H1 (cell line): ENCODE measurements at regions of chr16 and their contacts with region 1.

Region 1: GRCh38 chr16:67504041-67505021 is 21.0 kb upstream of the AGRP start:
- DNase-seq: no peak
- H3K4me3 ChIP-seq: no peak overlapping the region
- H3K27ac ChIP-seq: no peak overlapping the region
- H3K4me1 ChIP-seq: peaks cover 0 to 4% (median 2%) of the 10 kb centered on the region in 4 experiments; a peak in 3 of 7 replicates
- H3K27me3 ChIP-seq: peaks cover 0 to 2% (median 0%) of the 10 kb centered on the region in 4 experiments; a peak in 4 of 7 replicates
- CTCF ChIP-seq: no peak
- EP300 ChIP-seq: no peak
- POLR2A ChIP-seq: no peak
- RAD21 ChIP-seq: no peak

Region 2: DNA sequence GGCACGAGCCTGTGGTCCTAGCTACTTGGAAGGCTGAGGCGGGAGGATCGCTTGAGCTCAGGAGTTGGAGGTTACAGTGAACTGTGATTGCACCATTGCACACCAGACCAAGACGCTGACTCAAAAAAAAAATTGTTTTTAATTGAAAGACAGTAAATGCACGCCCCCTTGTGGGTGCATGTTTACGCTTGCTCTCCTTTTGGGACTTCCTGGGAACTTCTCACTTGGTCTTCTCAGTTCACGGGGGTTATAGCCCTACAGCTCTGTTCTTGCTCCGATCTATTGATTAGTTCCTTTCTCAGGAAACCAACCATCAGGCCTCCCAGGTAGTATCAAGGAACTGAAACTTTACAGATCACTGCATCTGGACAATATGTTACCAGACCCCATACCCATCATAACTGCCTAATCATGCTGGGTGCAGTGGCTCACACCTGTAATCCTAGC is 10.1 kb after region 1 on chr16:
- CTCF ChIA-PET with region 1: interaction called, 335 read pairs
- POLR2A ChIA-PET with region 1: interaction called, 3 read pairs
- DNase-seq: peak in 1 of 2 experiments; percentile 69
- H3K4me3 ChIP-seq: no peak overlapping the region
- H3K27ac ChIP-seq: no peak overlapping the region
- H3K4me1 ChIP-seq: no peaks in the 10 kb centered on the region
- H3K27me3 ChIP-seq: peaks cover 0 to 11% (median 5%) of the 10 kb centered on the region in 4 experiments; a peak in 2 of 7 replicates
- CTCF ChIP-seq: peak; percentile 38 to 77 (median 69)
- EP300 ChIP-seq: no peak
- POLR2A ChIP-seq: no peak
- RAD21 ChIP-seq: peak; percentile 55 to 65

Region 3: DNA sequence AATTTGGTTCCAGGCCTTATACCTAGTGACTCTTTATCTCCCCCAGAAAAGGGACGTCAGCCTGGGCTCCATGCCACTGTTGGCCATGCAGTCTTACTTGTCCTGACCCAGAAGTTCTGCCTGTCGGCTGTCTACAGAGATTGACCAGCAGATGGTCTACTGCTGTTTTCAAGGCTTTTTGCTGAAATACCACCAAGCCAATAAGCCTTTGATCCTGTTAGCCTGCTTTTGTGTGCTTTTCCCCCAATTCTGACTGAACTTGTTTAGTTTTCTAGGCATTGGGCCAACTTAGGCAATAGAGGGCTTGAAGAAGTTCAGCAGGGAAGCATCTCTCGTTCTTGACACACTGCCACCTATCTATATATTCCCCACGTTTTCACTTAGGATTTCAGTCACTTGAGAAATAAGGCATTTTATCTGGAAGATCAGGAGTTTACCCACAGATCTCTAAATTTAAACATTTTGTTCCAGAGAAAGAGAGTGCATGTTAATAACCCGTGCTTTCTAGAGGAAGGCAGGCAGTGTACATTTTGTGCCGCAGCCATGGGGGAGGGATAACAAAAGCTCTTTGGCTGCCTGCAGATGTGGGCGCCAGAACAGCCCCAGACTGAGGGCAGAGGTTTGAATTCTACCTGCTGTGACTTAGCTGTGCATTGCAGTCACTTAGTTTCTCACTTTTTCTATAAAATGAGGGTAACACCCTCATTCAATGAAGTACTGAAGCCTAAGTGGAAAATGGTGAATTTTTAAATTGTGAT is 128.3 kb after region 1 on chr16:
- CTCF ChIA-PET with region 1: no interaction called
- POLR2A ChIA-PET with region 1: no interaction called
- DNase-seq: no peak
- H3K4me3 ChIP-seq: no peak overlapping the region
- H3K27ac ChIP-seq: no peak overlapping the region
- H3K4me1 ChIP-seq: no peaks in the 10 kb centered on the region
- H3K27me3 ChIP-seq: no peaks in the 10 kb centered on the region
- CTCF ChIP-seq: no peak
- EP300 ChIP-seq: no peak
- POLR2A ChIP-seq: no peak
- RAD21 ChIP-seq: no peak